Endothelial cell of umbilical vein (primary cell): ENCODE measurements at regions of chr7 and their contacts with region 1.

Region 1: GRCh38 chr7:27873981-27874957 is 134.3 kb downstream of the TAX1BP1 start:
- DNase-seq: peak; percentile 98
- H3K4me3 ChIP-seq: peak overlapping the region in 1 of 3 experiments; percentile 10
- H3K27ac ChIP-seq: peak overlapping the region; percentile 95
- H3K4me1 ChIP-seq: peaks cover 34% of the 10 kb centered on the region
- H3K27me3 ChIP-seq: no peaks in the 10 kb centered on the region
- CTCF ChIP-seq: no peak
- POLR2A ChIP-seq: peak; percentile 56

Region 2: GRCh38 chr7:27188386-27189294 is 685.6 kb before region 1 on chr7:
- CTCF ChIA-PET with region 1: no interaction called
- POLR2A ChIA-PET with region 1: no interaction called
- dilution Hi-C with region 1: no loop called
- intact Hi-C with region 1: loop called (anchors 2 kb)
- DNase-seq: peak; percentile 81
- H3K4me3 ChIP-seq: peak overlapping the region; percentile 6 to 48 (median 44)
- H3K27ac ChIP-seq: peak overlapping the region; percentile 90
- H3K4me1 ChIP-seq: peaks cover 50% of the 10 kb centered on the region
- H3K27me3 ChIP-seq: peaks cover 2 to 7% of the 10 kb centered on the region in 2 experiments
- CTCF ChIP-seq: no peak
- POLR2A ChIP-seq: peak; percentile 53

Region 3: DNA sequence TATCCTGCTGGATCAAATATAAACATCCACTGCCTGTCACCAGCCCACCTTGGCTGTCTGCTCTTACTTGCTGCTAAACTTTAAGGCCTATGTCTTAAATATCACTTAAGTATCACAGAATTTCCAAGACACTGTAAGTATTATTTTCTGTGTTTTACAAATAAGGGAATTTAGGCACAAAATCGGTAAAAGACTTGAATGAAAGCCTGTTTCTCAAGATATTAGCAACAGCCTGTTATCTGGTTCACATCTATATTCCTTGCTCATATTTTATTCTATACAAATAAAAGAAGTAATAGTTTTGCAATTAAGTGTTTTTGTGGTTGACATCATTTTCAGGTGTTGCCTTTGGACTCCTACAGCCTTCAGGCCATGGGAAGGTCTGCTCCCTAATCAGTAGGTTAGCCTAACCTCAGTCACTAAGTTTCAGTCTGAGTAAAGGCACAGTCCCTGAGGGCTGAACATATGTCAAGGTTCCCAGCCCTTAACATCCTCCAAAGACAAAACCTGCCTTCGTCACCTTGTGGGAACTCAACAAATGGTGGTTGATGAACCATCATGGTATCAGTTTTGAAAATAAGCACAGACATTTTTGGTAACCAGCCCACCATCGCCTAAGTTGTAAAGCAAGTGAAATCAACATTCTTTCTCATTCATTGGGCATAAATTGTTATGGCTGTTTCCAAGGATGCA is 665.2 kb after region 1 on chr7:
- CTCF ChIA-PET with region 1: no interaction called
- POLR2A ChIA-PET with region 1: no interaction called
- dilution Hi-C with region 1: no loop called
- intact Hi-C with region 1: no loop called
- DNase-seq: no peak
- H3K4me3 ChIP-seq: no peak overlapping the region
- H3K27ac ChIP-seq: no peak overlapping the region
- H3K4me1 ChIP-seq: peaks cover under 1% of the 10 kb centered on the region
- H3K27me3 ChIP-seq: peaks cover 6 to 15% of the 10 kb centered on the region in 2 experiments
- CTCF ChIP-seq: no peak
- POLR2A ChIP-seq: no peak